B cell (primary cell): ENCODE measurements at regions of chr1 and their contacts with region 1.

Region 1: DNA sequence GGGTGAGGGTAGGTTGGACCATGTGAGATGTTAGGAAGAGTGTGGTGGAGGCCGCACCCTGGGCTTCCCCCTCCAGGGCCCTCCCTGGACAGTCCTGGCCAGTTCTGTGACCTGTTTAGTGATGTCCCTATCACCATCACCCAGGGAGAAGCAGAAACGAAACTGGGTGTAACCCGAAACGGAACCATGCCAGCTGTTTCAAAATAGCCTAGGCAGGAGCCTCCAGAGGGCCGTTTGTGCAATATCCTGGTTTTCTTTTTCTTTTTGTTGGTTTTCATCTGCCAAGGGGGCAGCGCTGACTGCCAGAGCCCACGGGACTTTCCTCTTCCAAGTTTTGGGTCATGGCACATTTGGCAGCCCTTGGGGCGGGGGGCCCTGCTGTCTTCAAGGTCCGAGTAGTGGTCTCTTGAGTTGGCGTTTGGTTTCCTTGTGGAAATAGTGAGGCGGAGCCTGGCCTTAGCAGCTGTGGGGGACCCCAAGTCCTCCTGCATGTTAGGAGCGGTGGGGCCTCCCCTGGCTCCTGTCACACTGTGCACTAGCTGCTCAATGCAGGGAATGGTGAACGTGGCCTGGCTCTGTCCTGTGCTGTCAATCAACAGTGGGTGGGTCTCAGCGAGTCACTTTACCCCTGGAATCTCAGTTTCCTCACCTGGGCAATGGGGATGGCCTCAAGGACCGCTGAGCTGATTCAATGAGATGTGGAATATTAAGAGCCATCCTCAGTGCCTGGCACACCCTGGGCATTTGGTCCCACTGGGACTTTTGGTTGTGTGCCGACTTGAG is 90.7 kb downstream of the ARHGEF10L start:
- DNase-seq: peak; percentile 36
- ATAC-seq: no peak
- H3K4me3 ChIP-seq: no peak overlapping the region
- H3K4me3 Mint-ChIP-seq: peak overlapping the region; percentile 39
- H3K27ac ChIP-seq: no peak overlapping the region
- H3K27ac Mint-ChIP-seq: peak overlapping the region; percentile 59
- H3K4me1 ChIP-seq: peaks cover 13 to 35% of the 10 kb centered on the region in 2 donors
- H3K4me1 Mint-ChIP-seq: peaks cover 22% of the 10 kb centered on the region
- H3K27me3 ChIP-seq: no peaks in the 10 kb centered on the region
- H3K27me3 Mint-ChIP-seq: no peaks in the 10 kb centered on the region
- CTCF ChIP-seq: no peak

Region 2: GRCh38 chr1:17439250-17440073 is 190.8 kb before region 1 on chr1 and contains the start of gene RCC2:
- CTCF ChIA-PET with region 1: interaction called, 5 read pairs
- POLR2A ChIA-PET with region 1: no interaction called
- intact Hi-C with region 1: loop called (anchors 10 kb)
- DNase-seq: peak; percentile 87
- ATAC-seq: peak; percentile 69
- H3K4me3 ChIP-seq: peak within 1 kb of the TSS; percentile 77 to 97 (median 87)
- H3K4me3 Mint-ChIP-seq: peak within 1 kb of the TSS; percentile 88
- H3K27ac ChIP-seq: peak within 1 kb of the TSS; percentile 70 to 87
- H3K27ac Mint-ChIP-seq: peak within 1 kb of the TSS; percentile 90
- H3K4me1 ChIP-seq: peaks cover 27 to 35% of the 10 kb centered on the region in 2 donors
- H3K4me1 Mint-ChIP-seq: peaks cover 31% of the 10 kb centered on the region
- H3K27me3 ChIP-seq: peaks cover 0 to 12% (median 3%) of the 10 kb centered on the region in 4 experiments
- H3K27me3 Mint-ChIP-seq: peaks cover 18% of the 10 kb centered on the region
- CTCF ChIP-seq: no peak
- total RNA-seq, gene RCC2: 76.9 TPM in 2 replicates

Region 3: DNA sequence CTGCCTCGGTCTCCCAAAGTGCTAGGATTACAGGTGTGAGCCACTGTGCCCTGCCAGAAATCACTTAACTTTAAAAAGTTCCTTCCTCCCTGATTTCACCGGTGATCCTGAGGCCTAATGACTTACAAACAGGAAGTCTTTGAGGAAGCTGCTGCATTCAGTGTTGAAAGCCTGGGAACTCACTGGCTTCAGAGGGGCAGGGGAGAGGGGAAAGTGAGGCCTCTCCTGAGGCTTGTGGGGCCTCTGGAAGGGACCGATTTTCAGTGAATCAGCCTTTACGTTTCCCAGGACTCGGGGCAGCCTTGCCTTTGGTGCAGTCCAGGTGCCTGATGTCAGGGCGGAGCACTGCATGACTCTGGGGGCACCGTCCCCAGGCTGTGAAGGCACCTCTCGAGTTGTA is 120.9 kb before region 1 on chr1:
- CTCF ChIA-PET with region 1: no interaction called
- POLR2A ChIA-PET with region 1: no interaction called
- intact Hi-C with region 1: no loop called
- DNase-seq: no peak
- ATAC-seq: no peak
- H3K4me3 ChIP-seq: no peak overlapping the region
- H3K4me3 Mint-ChIP-seq: no peak overlapping the region
- H3K27ac ChIP-seq: no peak overlapping the region
- H3K27ac Mint-ChIP-seq: no peak overlapping the region
- H3K4me1 ChIP-seq: no peaks in the 10 kb centered on the region
- H3K4me1 Mint-ChIP-seq: no peaks in the 10 kb centered on the region
- H3K27me3 ChIP-seq: no peaks in the 10 kb centered on the region
- H3K27me3 Mint-ChIP-seq: peaks cover 6% of the 10 kb centered on the region
- CTCF ChIP-seq: no peak